ENCODE measurements at regions of chrX and their contacts with region 1.

Region 1: DNA sequence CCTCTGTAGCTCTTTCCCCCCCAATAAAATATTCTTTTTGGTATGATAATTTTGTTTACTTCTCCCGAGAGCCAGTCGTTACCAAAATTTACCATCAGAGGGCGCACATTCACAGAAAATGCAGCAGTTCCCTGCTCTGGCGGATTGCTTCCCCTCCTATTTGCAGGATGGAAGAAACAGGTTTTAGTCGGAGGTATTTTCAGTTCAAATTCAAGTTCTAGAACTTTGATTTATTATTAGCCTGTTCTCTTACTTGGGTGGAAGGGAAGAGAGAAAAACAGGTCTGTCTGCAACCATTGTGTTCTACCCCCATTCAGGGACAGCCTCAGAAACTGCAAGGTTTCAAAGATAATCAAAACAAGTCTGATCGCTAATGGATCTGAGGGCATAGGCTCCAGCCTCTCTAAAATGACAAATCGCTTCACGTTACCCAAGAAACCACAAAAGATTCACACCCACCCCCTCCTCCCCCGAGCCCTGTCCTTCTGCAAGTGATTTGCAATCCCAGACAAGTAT is 263.8 kb upstream of the RPS6KA3 start:
- DNase-seq: peak in 8 of 10 donors; percentile 26 to 77 (median 56)
- H3K4me3 ChIP-seq: peak overlapping the region in 47 of 59 donors; percentile 1 to 63 (median 35)
- H3K27ac ChIP-seq: peak overlapping the region in 48 of 59 donors; percentile 6 to 83 (median 64)
- H3K27me3 ChIP-seq: peaks cover 0 to 75% (median 36%) of the 10 kb centered on the region in 45 donors
- CTCF ChIP-seq: peak; percentile 51 to 92 (median 83)

Region 2: GRCh38 chrX:19673375-19674040 is 857.0 kb before region 1 on chrX:
- intact Hi-C with region 1: no loop called
- DNase-seq: peak in 5 of 10 donors; percentile 33 to 64 (median 49)
- H3K4me3 ChIP-seq: no peak overlapping the region
- H3K27ac ChIP-seq: no peak overlapping the region
- H3K27me3 ChIP-seq: peaks cover 0 to 40% (median 4%) of the 10 kb centered on the region in 45 donors
- CTCF ChIP-seq: no peak

Region 3: DNA sequence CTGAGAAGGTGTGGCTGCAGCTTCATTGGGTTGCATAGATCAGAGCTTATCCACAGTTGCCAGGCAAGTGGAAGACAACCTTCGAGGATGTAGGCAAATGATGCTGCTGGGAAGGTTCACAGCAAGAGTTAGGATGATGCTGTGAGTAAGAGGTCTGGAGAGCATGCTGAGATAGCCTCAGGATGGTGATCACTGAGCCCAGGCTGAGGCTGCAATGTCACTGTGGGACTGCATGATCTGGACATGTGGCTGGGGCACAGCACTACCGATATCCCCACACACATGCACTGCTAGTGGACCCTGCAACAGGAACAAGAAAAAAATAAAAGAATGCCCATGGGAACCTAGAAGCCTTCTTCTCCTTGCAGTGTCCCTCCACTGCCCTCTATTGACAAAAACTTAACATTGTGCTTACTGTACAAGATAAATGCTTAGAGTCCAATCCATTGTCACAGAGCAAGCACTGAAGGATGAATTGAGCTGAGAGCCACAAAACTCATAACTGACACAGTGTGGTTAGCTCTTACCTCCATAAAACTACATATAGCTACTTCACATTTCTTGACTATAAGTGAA is 949.3 kb after region 1 on chrX:
- intact Hi-C with region 1: loop called (anchors 5 to 10 kb)
- DNase-seq: no peak
- H3K4me3 ChIP-seq: no peak overlapping the region
- H3K27ac ChIP-seq: no peak overlapping the region
- H3K27me3 ChIP-seq: peaks cover 0 to 60% (median 5%) of the 10 kb centered on the region in 45 donors
- CTCF ChIP-seq: peak in 55 of 56 donors; percentile 21 to 70 (median 54)

Region 4: GRCh38 chrX:21725496-21725895 is 1195.0 kb after region 1 on chrX:
- intact Hi-C with region 1: loop called in 1 of 2 experiments (anchors 10 kb)
- DNase-seq: peak in 1 of 10 donors; percentile 15
- H3K4me3 ChIP-seq: no peak overlapping the region
- H3K27ac ChIP-seq: no peak overlapping the region
- H3K27me3 ChIP-seq: peaks cover 0 to 93% (median 26%) of the 10 kb centered on the region in 45 donors
- CTCF ChIP-seq: peak in 36 of 56 donors; percentile 13 to 55 (median 36)

Region 5: DNA sequence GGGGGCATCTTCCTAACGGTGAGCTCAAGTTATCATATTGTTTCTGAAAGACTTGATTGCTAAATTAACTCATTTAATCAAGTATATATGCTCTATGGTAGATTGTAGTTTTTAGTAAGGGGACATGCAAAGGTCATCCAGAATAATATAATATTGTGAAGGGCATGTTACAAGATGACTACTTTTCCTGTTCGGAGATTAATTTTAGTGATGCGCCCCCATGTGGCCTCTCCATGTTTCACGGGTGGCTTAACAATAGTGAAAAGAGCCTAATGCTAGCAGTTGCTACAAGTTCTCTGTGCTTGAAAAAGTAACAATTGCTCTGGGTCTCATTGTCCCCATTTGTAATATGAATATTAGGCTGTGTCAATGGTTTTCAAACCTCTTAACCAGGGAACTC is 1215.3 kb after region 1 on chrX:
- intact Hi-C with region 1: loop called in 1 of 2 experiments (anchors 2 kb)
- DNase-seq: peak in 5 of 10 donors; percentile 29 to 66 (median 41)
- H3K4me3 ChIP-seq: no peak overlapping the region
- H3K27ac ChIP-seq: no peak overlapping the region
- H3K27me3 ChIP-seq: peaks cover 0 to 95% (median 38%) of the 10 kb centered on the region in 45 donors
- CTCF ChIP-seq: peak in 55 of 56 donors; percentile 28 to 70 (median 53)

Region 6: DNA sequence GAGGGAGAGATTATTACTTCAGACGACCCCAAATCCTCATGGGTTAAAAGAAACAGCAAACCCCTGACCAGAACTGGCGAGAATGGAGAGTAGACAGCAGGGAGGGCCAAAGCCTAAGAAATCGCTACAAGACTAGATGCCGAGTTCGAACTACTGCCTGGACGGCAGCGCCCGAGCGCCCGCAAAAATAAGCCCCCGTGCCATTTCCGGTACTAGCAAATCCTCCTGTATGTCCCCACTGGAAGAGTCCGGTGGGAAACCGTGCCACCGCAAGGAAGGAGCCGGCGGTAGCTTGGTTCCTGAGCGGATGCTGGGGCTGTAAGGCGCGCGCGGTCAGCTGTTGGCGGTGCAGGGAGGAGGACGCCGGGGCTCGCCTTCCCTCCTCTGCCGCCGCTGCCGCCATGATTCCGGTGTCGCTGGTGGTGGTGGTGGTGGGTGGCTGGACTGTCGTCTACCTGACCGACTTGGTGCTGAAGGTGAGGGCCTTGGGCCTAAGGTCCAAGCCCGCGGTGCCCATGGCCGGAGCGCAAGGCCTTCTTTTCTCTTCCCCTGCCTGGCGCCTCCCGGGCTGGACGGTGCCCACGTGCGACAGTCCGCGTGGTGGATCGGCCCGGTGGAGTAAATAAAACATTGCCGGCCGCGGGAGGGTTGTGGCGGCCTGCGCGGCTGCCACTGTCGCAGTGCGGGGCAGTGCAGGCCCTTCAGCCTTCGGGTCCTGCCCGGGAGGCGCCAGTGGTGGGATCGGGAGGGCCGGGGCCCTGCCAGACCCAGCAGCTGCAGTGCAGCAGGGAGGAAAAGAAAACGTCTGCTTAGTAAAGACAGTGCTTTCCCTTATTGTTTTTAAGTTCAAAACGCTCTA is 1309.1 kb after region 1 on chrX and contains the start of gene MBTPS2:
- intact Hi-C with region 1: loop called in 1 of 2 experiments (anchors 10 kb)
- DNase-seq: peak; percentile 63 to 82 (median 76)
- H3K4me3 ChIP-seq: peak within 1 kb of the TSS; percentile 39 to 81 (median 66)
- H3K27ac ChIP-seq: peak within 1 kb of the TSS in 57 of 59 donors; percentile 14 to 88 (median 78)
- H3K27me3 ChIP-seq: peaks cover 0 to 40% (median 4%) of the 10 kb centered on the region in 45 donors
- CTCF ChIP-seq: peak in 33 of 56 donors; percentile 2 to 50 (median 24)
- total RNA-seq, gene MBTPS2: 10.1 to 26.6 (median 18.5) TPM

Region 7: DNA sequence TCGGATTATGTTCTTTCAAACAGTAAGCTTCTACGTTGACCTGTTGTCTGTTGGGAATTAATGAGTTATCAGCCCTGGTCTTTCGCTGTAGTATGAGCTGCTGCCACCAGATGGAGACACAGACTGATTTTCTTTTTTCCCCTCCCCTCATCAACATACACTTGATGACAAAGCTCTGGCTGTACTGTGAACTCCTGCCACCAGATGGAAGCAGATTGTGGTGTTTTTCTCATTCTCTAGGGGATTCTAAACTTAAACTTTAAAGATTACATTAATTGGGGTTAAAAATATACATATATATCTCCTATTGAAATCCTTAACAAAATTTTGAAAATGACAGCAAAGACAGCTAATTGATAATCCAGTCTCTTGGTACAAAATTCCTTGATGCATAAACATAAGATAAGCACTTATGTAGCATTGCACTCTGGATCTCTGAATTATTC is 1454.9 kb after region 1 on chrX:
- intact Hi-C with region 1: loop called in 1 of 2 experiments (anchors 10 kb)
- DNase-seq: peak in 9 of 10 donors; percentile 37 to 81 (median 60)
- H3K4me3 ChIP-seq: no peak overlapping the region
- H3K27ac ChIP-seq: peak overlapping the region in 1 of 59 donors; percentile 35
- H3K27me3 ChIP-seq: peaks cover 0 to 47% (median 5%) of the 10 kb centered on the region in 45 donors
- CTCF ChIP-seq: peak; percentile 61 to 99 (median 94)

Measured in dorsolateral prefrontal cortex (tissue), 120 donors.